ENCODE measurements at regions of chr11 and their contacts with region 1.

Region 1: GRCh38 chr11:43567396-43567975 is 113.1 kb upstream of the HSD17B12 start:
- H3K4me3 ChIP-seq: no peak overlapping the region
- H3K27ac ChIP-seq: no peak overlapping the region
- H3K4me1 ChIP-seq: no peaks in the 10 kb centered on the region
- CTCF ChIP-seq: no peak

Region 2: DNA sequence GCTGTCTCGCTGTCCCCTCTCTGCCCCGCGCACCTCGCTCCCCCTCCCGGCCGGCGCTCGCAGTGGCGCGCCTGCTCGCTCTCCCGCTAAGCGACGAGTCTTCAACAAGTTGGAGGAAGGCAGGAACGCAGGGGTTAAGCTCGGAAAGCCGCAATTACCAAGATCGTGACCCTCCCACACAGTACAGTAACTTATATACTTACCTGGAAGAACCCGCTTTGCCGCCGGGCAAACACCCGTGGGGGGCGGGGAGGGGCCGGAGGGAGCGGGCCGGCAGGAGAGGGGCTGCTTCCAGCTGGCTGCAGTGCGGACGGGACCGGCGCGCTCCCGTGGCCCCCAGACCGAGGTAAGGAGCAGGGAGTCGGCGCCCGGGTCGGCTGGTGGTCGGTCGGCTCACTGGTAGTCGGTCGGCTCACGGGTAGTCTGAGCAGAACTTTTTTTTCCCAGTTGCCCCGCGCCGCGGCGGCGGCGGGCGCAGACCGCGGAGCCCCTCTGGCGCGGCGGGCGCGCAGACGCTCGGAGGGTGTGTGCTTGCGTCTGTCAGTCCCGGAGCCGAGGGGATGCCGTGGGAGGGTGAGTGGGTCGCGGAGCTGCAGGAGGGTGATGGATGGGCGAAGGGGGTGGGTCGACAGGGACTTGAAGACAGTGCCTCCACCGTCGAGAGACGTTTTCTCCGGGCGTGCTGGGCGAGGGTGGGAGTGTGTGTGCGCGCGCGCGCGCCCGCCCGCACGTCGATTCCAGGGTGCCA is 11.9 kb after region 1 on chr11:
- CTCF ChIA-PET with region 1: interaction called, 49 read pairs
- POLR2A ChIA-PET with region 1: interaction called, 3 read pairs
- H3K4me3 ChIP-seq: peak overlapping the region; percentile 51
- H3K27ac ChIP-seq: no peak overlapping the region
- H3K4me1 ChIP-seq: peaks cover 3% of the 10 kb centered on the region; the same call in 1 of the 2 replicates
- CTCF ChIP-seq: no peak